ENCODE measurements at regions of chr10 and their contacts with region 1.

Region 1: DNA sequence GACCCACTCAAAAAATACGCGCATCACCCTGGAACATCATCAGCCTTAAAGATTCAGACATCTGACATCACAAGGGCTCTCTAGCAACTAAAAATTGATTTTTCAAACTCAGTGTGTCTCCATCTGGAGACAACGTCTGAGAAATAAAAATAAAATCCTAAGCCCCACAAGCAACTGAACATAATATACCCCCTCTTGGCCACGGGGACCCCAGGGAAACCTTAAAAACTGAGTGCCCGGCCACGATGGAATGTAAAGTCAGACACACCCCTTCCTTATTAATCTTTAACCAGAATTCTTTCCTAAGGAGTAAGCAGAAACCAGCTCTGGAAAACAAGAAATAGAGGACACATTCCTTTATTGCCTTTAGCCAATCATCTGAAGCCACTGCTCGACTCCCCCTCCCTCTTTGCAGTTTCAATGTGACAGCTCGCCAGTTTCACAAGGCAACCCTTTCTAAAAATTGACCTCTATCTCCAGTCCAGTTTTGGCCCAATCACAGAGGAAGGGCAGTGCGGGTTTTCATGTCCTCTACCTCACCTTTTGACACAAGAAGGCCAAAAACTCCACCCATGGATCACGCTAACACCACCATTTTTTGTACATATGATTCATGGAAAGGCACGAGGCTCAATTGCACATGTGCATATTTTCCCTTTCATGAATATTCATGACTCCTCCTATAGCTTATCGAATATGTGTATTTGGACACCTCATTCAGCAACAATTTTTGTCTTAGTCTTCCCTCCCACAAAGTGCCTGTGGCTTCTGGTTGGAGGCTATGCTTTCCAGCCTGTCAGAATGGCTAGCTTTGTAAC is 24.2 kb downstream of the IFIT3 start:
- DNase-seq: no peak

Region 2: DNA sequence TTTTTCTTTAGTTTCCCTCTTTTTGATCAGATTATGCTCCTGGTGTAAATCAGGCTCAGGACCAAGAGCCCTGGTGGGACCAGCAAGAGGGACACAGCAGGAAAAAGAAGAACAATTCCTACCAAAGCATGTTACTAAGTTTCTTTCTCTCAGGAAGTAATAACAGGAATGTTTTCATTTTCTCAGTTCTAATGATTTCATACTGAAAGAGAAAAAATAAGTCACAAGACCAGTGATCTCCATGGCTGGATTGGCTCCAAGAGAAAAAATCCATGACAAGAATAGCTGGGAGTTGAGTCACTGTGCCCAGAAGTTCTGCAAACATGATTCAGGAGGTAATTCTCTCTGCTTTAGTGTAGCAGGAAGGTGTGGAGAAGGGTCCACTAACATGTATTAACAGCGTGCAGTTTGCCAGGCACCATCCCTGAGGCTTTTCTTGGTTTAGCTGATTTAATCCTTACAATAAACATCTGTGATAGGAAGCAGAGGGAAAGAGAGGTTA is 73.9 kb before region 1 on chr10:
- intact Hi-C with region 1: loop called (anchors 5 kb)
- DNase-seq: no peak

Region 3: GRCh38 chr10:89373916-89374711 is 22.1 kb after region 1 on chr10:
- intact Hi-C with region 1: loop called (anchors 1 kb)
- DNase-seq: peak; percentile 83